ENCODE measurements at regions of chr11 and their contacts with region 1.

Region 1: GRCh38 chr11:134634897-134635831 is 223.1 kb upstream of the B3GAT1 start:
- DNase-seq: peak in 20 of 42 donors; percentile 14 to 75 (median 42)

Region 2: GRCh38 chr11:134170919-134171281 is 464.3 kb before region 1 on chr11:
- intact Hi-C with region 1: no loop called
- DNase-seq: no peak

Region 3: GRCh38 chr11:134360050-134360835 is 274.9 kb before region 1 on chr11:
- intact Hi-C with region 1: loop called (anchors 10 kb)
- DNase-seq: peak; percentile 81 to 96 (median 91)

Region 4: GRCh38 chr11:134393638-134394037 is 241.5 kb before region 1 on chr11:
- intact Hi-C with region 1: loop called (anchors 10 kb)
- DNase-seq: peak in 39 of 42 donors; percentile 43 to 87 (median 70)